ENCODE measurements at regions of chrX and their contacts with region 1.

Region 1: GRCh38 chrX:23907498-23908218 is at the starts of genes APOO and CXorf58:
- DNase-seq: peak; percentile 91
- ATAC-seq: peak; percentile 96
- H3K4me3 Mint-ChIP-seq: peak within 1 kb of the TSS; percentile 84
- H3K27ac Mint-ChIP-seq: peak within 1 kb of the TSS; percentile 89
- H3K4me1 Mint-ChIP-seq: peaks cover 11% of the 10 kb centered on the region
- H3K27me3 Mint-ChIP-seq: no peaks in the 10 kb centered on the region
- total RNA-seq, gene APOO: 23.8 to 24.2 TPM
- total RNA-seq, gene CXorf58: not detected

Region 2: GRCh38 chrX:24054182-24055042 is 146.8 kb after region 1 on chrX and contains the start of gene EIF2S3:
- POLR2A ChIA-PET with region 1: interaction called, 35 read pairs
- DNase-seq: peak; percentile 84
- ATAC-seq: peak; percentile 88
- H3K4me3 Mint-ChIP-seq: no peak within 1 kb of the TSS
- H3K27ac Mint-ChIP-seq: peak within 1 kb of the TSS; percentile 100
- H3K4me1 Mint-ChIP-seq: peaks cover 7% of the 10 kb centered on the region
- H3K27me3 Mint-ChIP-seq: no peaks in the 10 kb centered on the region
- total RNA-seq, gene EIF2S3: 194 to 199 TPM

Measured in activated naive CD8-positive, alpha-beta T cell treated with anti-CD3 and anti-CD28 coated beads, Interleukin-2, amount 10 ng/mL, durations not matched to agents 7 days and 5 days (primary cell).